Activated CD4-positive, alpha-beta memory T cell treated with anti-CD3 and anti-CD28 coated beads for 36 hours (primary cell): ENCODE measurements at regions of chr1 and their contacts with region 1.

Region 1: DNA sequence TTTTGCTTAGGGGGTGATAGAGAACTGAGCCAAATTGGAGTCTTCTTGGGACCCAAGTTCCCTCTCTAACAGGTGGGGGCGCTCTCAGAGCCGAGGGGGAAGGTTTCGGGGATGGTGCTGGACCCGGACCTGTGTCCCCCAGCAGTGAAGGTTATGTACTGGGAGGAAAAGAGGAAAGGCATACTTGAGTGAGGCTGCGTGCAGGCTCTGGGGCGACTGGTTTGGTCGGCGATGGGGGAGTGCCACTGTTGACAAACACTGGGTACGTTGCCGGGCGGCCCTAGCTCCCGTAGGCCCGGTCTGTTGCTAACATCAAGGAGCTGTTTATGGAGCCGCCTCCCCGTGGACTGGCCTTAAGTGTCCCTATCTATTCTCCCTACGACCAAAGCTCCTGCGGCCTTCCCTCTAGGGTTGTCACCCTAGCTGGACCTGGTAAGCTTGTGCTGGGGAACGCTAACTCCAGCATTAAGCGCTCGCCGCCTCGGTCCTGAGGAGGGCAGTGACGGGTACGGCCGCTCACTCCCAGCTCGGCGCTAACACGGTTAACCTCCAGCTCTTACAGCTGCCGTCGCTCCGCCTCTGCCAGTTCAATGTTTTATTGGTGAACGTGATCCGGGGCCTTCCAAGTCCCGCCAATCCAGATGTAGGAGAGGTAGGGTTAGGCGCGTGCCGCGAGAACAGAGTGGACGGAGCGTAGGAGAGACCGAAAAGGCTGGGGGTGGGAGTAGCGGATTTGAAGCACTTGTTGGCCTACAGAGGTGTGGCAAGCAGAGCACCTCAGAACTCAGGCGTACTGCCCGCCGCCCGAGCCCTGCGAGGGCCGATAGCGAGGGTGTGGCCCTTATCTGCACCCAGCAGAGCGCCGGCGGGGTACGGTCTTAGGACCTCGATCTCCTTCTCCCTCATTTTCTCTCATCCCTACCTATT is at the start of gene PPOX:
- DNase-seq: peak; percentile 97
- H3K4me3 Mint-ChIP-seq: peak within 1 kb of the TSS; percentile 86
- H3K27ac Mint-ChIP-seq: peak within 1 kb of the TSS; percentile 93
- H3K4me1 Mint-ChIP-seq: peaks cover 48% of the 10 kb centered on the region
- H3K27me3 Mint-ChIP-seq: no peaks in the 10 kb centered on the region
- total RNA-seq, gene PPOX: 27.0 to 30.7 TPM

Region 2: DNA sequence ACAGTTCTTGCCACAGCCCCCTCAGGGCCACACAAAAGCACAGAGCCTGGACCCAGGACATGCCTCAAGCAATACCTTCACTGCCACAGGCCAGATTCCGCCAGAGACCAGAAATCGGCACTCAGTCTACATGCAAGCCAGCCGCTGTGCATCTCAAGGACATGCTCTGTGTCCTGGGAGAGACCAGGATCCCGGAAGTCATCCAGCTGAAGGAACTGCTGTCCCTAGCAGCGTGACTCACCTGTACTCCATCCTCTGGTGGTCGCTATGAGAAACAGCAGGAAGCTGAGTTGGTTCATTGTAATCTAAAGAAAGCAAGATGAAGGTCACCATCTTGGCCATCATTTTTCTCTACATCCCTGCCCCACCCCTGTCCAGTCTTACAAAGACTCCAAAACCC is 281.4 kb before region 1 on chr1:
- CTCF ChIA-PET with region 1: no interaction called
- POLR2A ChIA-PET with region 1: no interaction called
- intact Hi-C with region 1: no loop called
- DNase-seq: no peak
- H3K4me3 Mint-ChIP-seq: no peak overlapping the region
- H3K27ac Mint-ChIP-seq: no peak overlapping the region
- H3K4me1 Mint-ChIP-seq: no peaks in the 10 kb centered on the region
- H3K27me3 Mint-ChIP-seq: peaks cover 3% of the 10 kb centered on the region

Region 3: DNA sequence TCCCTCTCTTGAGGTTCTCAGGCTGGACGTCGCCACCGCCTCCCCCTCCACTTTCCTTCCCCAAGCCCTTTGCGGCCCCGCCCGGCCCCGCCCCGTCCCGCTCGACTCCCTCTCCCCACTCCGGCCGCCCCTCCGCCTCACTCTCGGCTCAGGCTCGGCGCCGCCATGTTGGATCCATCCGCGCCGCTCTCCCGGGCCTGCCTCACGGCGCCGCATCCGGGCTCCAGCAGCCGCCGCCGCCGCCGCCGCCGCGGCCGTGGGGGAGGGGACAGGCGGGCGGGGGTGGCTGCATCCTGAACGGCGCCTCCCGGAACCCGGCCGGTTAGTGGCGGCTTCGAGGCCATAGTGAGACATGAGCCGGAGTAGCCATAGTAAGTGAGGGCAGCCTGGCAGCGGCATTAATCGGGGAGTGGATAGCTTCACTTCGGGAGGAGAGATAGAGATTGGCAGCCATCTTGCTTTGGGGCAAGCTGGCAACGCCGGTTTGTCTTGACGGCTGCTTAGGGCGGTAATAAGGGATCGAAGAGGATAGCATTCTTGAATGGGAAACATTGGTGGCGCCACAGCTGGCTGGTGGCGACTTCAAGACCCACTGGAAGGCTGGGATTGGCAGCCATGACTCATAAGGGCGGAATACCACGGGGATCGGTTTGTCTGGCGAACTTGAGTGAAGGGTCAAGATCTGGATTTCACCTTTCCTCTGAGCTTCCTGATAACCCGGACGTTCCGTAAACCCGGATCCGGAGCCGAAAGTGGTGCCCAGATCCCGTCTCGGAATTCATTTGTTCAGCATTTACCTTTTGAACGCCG is 33.4 kb before region 1 on chr1 and contains the start of gene DEDD:
- CTCF ChIA-PET with region 1: interaction called, 11 read pairs
- POLR2A ChIA-PET with region 1: interaction called, 16 read pairs
- intact Hi-C with region 1: no loop called
- DNase-seq: peak; percentile 96
- H3K4me3 Mint-ChIP-seq: no peak within 1 kb of the TSS
- H3K27ac Mint-ChIP-seq: no peak within 1 kb of the TSS
- H3K4me1 Mint-ChIP-seq: peaks cover 43% of the 10 kb centered on the region
- H3K27me3 Mint-ChIP-seq: no peaks in the 10 kb centered on the region
- total RNA-seq, gene DEDD: 35.0 to 40.2 TPM

Region 4: DNA sequence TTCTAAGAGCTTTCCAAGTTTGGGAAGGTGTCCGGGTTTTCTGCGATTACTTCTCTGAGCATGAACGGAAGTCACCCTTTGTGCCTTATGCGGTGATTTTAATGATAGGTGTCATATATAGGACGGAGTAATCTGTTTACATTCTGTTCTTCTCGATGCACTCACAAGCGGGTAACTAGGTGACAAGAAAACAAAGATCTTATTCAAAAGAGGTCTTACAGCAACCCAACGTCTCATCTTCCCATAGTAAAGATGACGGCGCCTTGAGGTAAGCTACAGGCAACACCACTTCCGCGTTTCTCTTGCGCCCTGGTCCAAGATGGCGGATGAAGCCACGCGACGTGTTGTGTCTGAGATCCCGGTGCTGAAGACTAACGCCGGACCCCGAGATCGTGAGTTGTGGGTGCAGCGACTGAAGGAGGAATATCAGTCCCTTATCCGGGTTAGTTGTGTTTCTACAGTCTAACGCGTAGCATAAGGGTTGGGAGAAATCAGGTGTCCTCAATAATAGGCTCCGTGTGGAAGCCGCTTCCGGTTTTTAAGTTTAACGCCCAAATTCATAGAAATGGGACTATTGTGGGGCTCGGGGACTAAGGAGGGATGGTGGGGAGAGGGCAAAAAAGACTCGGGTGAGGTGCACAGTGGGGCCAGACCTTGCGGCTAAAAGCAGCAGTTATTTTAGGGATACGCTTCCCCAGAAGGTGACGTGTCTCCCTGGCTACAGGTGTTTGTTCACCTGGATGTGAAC is 12.2 kb before region 1 on chr1 and contains the start of gene UFC1:
- CTCF ChIA-PET with region 1: interaction called, 23 read pairs
- POLR2A ChIA-PET with region 1: interaction called, 25 read pairs
- intact Hi-C with region 1: no loop called
- DNase-seq: peak; percentile 88
- H3K4me3 Mint-ChIP-seq: peak within 1 kb of the TSS; percentile 86
- H3K27ac Mint-ChIP-seq: peak within 1 kb of the TSS; percentile 97
- H3K4me1 Mint-ChIP-seq: peaks cover 20% of the 10 kb centered on the region
- H3K27me3 Mint-ChIP-seq: no peaks in the 10 kb centered on the region
- total RNA-seq, gene UFC1: 87.7 to 91.0 TPM

Region 5: DNA sequence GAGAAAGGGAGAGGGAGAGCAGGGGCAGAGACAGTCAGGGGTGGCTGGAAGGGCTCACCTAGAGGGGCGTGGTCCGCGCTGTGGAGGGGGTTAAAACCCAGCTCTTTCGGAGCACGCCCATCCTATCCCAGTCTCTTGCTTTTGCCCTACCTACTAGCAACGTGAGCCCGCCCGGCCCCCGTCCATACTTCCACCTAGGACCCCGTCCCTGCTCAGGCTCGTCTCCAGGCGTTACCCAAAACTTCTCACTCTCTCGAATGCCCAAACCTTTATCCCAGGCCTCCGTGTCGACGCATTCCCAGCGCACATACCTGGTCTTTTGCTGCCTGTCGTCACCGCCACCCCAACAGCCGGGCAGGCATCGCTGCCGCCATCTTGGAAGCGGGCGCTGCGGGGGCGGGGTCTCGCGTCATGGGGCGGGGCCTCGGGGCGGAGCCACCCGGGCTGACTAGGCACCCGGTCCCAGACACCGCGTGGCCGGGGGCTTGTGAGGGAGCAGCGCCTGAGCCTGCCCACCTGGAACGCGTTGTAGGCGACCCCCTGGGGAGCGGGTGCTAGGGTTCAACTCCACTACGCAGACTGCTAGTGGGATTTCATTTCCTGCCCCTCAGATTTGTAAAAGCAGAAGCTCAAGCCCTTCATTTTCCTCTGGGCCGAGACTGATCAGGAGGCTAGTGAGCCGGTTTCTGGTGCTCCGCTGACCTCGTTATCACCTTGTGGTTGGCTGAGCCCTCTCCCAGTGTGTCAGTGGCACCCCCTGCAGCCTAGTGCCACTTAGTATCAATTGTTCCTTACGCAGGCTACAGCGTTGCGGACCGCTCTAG is 11.3 kb after region 1 on chr1 and contains the start of gene B4GALT3:
- CTCF ChIA-PET with region 1: interaction called, 45 read pairs
- POLR2A ChIA-PET with region 1: interaction called, 41 read pairs
- intact Hi-C with region 1: no loop called
- DNase-seq: peak; percentile 97
- H3K4me3 Mint-ChIP-seq: peak within 1 kb of the TSS; percentile 100
- H3K27ac Mint-ChIP-seq: peak within 1 kb of the TSS; percentile 97
- H3K4me1 Mint-ChIP-seq: peaks cover 58% of the 10 kb centered on the region
- H3K27me3 Mint-ChIP-seq: no peaks in the 10 kb centered on the region
- total RNA-seq, gene B4GALT3: 46.3 to 50.9 TPM

Region 6: GRCh38 chr1:161185282-161185682 is 19.3 kb after region 1 on chr1:
- CTCF ChIA-PET with region 1: interaction called, 45 read pairs
- POLR2A ChIA-PET with region 1: interaction called, 14 read pairs
- intact Hi-C with region 1: loop called (anchors 2 kb)
- DNase-seq: peak; percentile 89
- H3K4me3 Mint-ChIP-seq: peak overlapping the region; percentile 49
- H3K27ac Mint-ChIP-seq: peak overlapping the region; percentile 95
- H3K4me1 Mint-ChIP-seq: peaks cover 81% of the 10 kb centered on the region
- H3K27me3 Mint-ChIP-seq: no peaks in the 10 kb centered on the region

Region 7: DNA sequence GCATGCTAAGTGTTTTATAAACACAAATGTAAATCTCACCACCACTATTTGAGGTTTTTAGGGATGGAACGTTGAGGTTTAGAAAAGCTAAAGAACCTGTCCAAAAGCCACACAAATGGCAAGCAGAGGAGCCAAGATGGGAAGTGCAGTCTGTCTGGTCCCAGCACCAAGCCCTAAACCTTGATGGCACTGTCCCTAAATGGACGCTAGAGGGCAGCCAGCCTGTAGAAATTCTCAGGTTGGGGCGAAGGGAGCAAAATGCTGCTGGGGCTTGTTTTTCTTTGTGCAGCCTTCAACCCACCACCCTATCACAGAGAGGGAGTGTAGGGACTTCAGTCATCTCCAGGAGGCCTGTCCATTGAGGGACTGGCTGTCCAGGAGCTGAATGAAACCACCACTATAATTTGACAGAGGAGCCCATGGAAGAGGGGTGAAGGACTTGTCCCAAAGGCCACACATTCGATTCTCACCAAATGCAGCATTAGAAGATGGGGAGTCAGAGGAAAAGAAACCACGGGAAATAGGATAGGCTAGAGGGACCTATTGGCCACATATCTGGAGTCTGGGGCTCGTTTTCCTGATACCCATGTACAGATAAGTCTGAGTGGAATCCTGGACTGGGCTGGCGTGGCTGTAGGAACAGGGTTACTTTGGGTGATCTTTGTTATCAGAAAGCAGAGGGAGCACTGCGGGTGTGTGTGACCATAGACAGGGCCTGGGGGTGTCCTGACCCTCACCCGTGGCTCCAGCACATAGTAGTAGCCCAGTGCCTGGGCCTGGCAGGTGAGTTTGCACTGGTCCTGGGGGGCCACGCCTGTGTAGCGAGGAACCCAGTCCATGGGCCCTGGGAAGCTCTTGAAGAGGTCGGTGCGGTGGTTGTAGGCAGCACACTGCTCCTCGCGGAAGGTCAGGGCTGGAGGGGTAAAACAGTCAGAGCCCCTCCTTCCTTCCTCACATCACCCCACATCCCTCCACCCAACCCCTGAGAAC is 26.8 kb after region 1 on chr1:
- CTCF ChIA-PET with region 1: interaction called, 25 read pairs
- POLR2A ChIA-PET with region 1: interaction called, 4 read pairs
- intact Hi-C with region 1: no loop called
- DNase-seq: peak; percentile 81
- H3K4me3 Mint-ChIP-seq: no peak overlapping the region
- H3K27ac Mint-ChIP-seq: peak overlapping the region; percentile 42
- H3K4me1 Mint-ChIP-seq: peaks cover 29% of the 10 kb centered on the region
- H3K27me3 Mint-ChIP-seq: no peaks in the 10 kb centered on the region

Region 8: GRCh38 chr1:161201828-161202725 is 36.1 kb after region 1 on chr1 and contains the start of gene NDUFS2:
- CTCF ChIA-PET with region 1: interaction called, 12 read pairs
- POLR2A ChIA-PET with region 1: interaction called, 11 read pairs
- intact Hi-C with region 1: no loop called
- DNase-seq: peak; percentile 97
- H3K4me3 Mint-ChIP-seq: peak within 1 kb of the TSS; percentile 88
- H3K27ac Mint-ChIP-seq: peak within 1 kb of the TSS; percentile 87
- H3K4me1 Mint-ChIP-seq: peaks cover 59% of the 10 kb centered on the region
- H3K27me3 Mint-ChIP-seq: no peaks in the 10 kb centered on the region
- total RNA-seq, gene NDUFS2: 98.3 to 103 TPM

Region 9: DNA sequence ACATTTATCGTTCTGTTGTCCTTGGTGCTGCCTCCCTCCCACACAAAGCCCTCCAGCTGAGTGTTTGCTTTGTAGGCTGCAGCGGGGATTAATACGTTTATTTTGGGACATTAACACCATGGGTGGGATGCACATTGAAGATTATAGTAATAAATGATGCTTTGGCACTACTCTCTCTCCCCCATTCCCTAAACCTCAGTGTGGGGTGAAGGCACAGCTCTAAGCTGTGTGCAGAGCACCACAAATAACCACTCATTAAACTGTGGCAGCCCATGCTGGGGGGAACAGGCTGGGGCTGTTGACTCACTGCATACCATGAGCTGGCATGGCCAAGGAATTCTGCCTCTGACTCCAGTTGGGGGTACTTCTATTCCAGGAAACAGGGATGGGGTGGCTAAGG is 100.2 kb after region 1 on chr1:
- CTCF ChIA-PET with region 1: no interaction called
- POLR2A ChIA-PET with region 1: no interaction called
- intact Hi-C with region 1: no loop called
- DNase-seq: no peak
- H3K4me3 Mint-ChIP-seq: no peak overlapping the region
- H3K27ac Mint-ChIP-seq: no peak overlapping the region
- H3K4me1 Mint-ChIP-seq: no peaks in the 10 kb centered on the region
- H3K27me3 Mint-ChIP-seq: peaks cover 12% of the 10 kb centered on the region